ENCODE measurements at regions of chr12 and their contacts with region 1.

Region 1: DNA sequence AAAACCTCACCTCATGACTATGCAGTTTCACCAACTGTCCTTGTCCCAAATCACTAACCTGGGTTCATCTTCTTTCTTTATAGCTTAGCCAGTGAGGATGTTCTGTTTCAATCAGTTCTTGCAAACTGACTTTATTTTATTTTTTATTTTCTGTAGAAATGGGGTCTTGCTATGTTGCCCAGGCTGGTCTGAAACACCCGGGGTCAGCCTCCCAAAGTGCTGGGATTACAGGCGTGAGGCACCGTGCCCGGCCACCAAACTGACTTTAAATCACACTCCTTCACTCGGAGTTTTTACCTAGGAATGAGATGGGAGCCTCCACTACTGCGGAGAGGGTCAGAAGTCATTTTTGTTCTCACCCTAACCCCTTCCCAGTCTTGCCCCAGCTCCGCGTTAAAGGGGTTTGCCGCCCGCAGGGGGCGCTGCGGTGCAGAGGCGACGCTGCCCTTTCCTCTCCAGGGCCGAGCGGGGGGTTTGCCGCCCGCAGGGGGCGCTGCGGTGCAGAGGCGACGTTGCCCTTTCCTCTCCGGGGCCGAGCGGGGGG is 7.0 kb upstream of the B4GALNT3 start:
- DNase-seq: peak in 3 of 5 donors; percentile 49 to 64 (median 61)
- ATAC-seq: peak in 3 of 4 donors; percentile 19 to 35 (median 32)
- H3K4me3 ChIP-seq: no peak overlapping the region
- H3K27ac ChIP-seq: no peak overlapping the region
- H3K4me1 ChIP-seq: peaks cover 0 to 28% (median 0%) of the 10 kb centered on the region in 12 donors
- H3K27me3 ChIP-seq: peaks cover 0 to 4% (median 0%) of the 10 kb centered on the region in 9 donors
- CTCF ChIP-seq: no peak
- POLR2A ChIP-seq: no peak

Region 2: DNA sequence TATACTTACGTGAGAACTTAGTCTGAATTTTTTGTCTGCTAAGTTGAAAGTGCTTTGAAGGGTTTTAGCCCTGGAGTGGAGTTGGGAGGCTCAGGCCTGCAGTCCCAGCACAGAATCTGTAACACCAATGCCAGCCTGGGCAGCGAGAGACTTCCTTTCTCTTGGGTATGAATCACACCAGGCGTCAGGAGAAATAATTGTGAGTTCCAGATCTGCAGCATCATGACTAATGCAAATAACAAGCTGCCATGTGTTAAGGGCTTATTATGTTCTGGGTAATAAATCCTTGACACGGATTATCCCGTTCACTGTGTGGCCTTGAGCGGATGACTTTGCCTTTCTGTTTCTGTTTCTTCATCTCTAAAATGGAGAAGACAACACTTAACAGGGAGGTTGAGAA is 77.6 kb after region 1 on chr12:
- intact Hi-C with region 1: no loop called
- DNase-seq: no peak
- ATAC-seq: no peak
- H3K4me3 ChIP-seq: no peak overlapping the region
- H3K27ac ChIP-seq: no peak overlapping the region
- H3K4me1 ChIP-seq: peaks cover 0 to 8% (median 0%) of the 10 kb centered on the region in 12 donors
- H3K27me3 ChIP-seq: no peaks in the 10 kb centered on the region
- CTCF ChIP-seq: no peak
- POLR2A ChIP-seq: no peak

Region 3: GRCh38 chr12:541676-542324 is 89.1 kb after region 1 on chr12:
- intact Hi-C with region 1: loop called in 8 of 10 experiments (anchors 2 kb)
- DNase-seq: peak in 1 of 5 donors; percentile 26
- ATAC-seq: peak in 3 of 4 donors; percentile 14 to 36 (median 27)
- H3K4me3 ChIP-seq: no peak overlapping the region
- H3K27ac ChIP-seq: peak overlapping the region in 8 of 12 donors; percentile 8 to 70 (median 60)
- H3K4me1 ChIP-seq: peaks cover 0 to 43% (median 25%) of the 10 kb centered on the region in 12 donors
- H3K27me3 ChIP-seq: peaks cover 0 to 6% (median 6%) of the 10 kb centered on the region in 9 donors
- CTCF ChIP-seq: no peak
- POLR2A ChIP-seq: no peak

Region 4: GRCh38 chr12:553205-554000 is 100.7 kb after region 1 on chr12:
- intact Hi-C with region 1: no loop called
- DNase-seq: peak in 2 of 5 donors; percentile 30 to 76
- ATAC-seq: no peak
- H3K4me3 ChIP-seq: peak overlapping the region in 3 of 12 donors; percentile 7 to 35 (median 17)
- H3K27ac ChIP-seq: peak overlapping the region in 9 of 12 donors; percentile 13 to 83 (median 49)
- H3K4me1 ChIP-seq: peaks cover 0 to 54% (median 29%) of the 10 kb centered on the region in 12 donors
- H3K27me3 ChIP-seq: no peaks in the 10 kb centered on the region
- CTCF ChIP-seq: no peak
- POLR2A ChIP-seq: no peak